Panc1 (cell line): ENCODE measurements at regions of chr11 and their contacts with region 1.

Region 1: GRCh38 chr11:121194731-121195596 is 93.9 kb downstream of the TECTA start:
- DNase-seq: peak; percentile 46
- ATAC-seq: peak; percentile 97
- H3K4me3 ChIP-seq: no peak overlapping the region
- H3K27ac ChIP-seq: no peak overlapping the region
- H3K4me1 ChIP-seq: no peaks in the 10 kb centered on the region
- H3K27me3 ChIP-seq: peaks cover 28% of the 10 kb centered on the region
- CTCF ChIP-seq: peak; percentile 91

Region 2: GRCh38 chr11:121112498-121113455 is 82.2 kb before region 1 on chr11:
- CTCF ChIA-PET with region 1: no interaction called
- POLR2A ChIA-PET with region 1: no interaction called
- in situ Hi-C with region 1: no loop called
- intact Hi-C with region 1: loop called (anchors 10 kb)
- DNase-seq: no peak
- ATAC-seq: peak; percentile 97
- H3K4me3 ChIP-seq: no peak overlapping the region
- H3K27ac ChIP-seq: no peak overlapping the region
- H3K4me1 ChIP-seq: 0 out of 2 replicates have a peak, but pooled peaks cover 3% of the 10 kb centered on the region
- H3K27me3 ChIP-seq: peaks cover 33% of the 10 kb centered on the region
- CTCF ChIP-seq: peak; percentile 86

Region 3: DNA sequence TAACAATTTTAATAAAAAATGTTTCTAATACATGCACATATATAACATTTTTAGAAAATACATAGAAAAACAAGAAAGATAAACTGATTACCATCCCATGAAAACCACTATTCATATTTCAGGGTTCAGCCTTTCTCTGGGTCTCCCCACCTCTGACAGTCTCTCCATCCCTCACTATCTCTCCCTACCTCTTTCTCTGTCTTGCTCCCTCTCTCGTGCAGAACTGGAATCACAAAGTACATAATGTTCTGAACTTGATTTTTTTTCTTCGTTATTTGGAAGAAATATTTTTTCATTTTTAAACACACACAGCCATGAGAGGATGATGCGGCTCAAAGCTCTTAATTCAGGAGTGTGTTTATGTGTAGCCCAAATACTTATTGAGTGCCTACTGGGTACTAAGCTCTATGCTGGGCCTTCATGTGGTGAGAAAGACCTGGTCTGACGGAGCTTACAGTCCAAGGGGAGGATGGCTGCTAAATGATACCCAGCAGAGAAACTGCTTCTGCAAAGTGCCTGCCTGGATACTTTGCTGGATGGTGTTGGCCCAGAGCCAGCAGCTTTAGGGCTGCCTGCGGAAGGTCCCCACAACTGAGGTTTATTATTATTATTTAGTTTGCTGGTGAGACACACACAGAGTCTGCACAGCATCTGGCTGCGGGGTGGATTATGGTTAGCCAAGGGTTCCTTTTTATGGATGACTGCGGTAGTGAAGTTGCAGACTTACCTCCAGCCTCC is 140.2 kb after region 1 on chr11:
- CTCF ChIA-PET with region 1: no interaction called
- POLR2A ChIA-PET with region 1: interaction called, 16 read pairs
- in situ Hi-C with region 1: no loop called
- intact Hi-C with region 1: no loop called
- DNase-seq: no peak
- ATAC-seq: peak; percentile 48
- H3K4me3 ChIP-seq: no peak overlapping the region
- H3K27ac ChIP-seq: no peak overlapping the region
- H3K4me1 ChIP-seq: no peaks in the 10 kb centered on the region
- H3K27me3 ChIP-seq: peaks cover 16% of the 10 kb centered on the region
- CTCF ChIP-seq: peak; percentile 32; the same call in 1 of the 2 replicates